Activated CD4-positive, alpha-beta memory T cell treated with anti-CD3 and anti-CD28 coated beads for 36 hours (primary cell): ENCODE measurements at regions of chr2 and their contacts with region 1.

Region 1: GRCh38 chr2:176110975-176111663 is 4.0 kb downstream of the HOXD11 start:
- DNase-seq: peak; percentile 49
- H3K4me3 Mint-ChIP-seq: peak overlapping the region; percentile 8
- H3K27ac Mint-ChIP-seq: no peak overlapping the region
- H3K4me1 Mint-ChIP-seq: peaks cover 14% of the 10 kb centered on the region
- H3K27me3 Mint-ChIP-seq: peaks cover 80% of the 10 kb centered on the region

Region 2: GRCh38 chr2:176161819-176162626 is 50.9 kb after region 1 on chr2:
- CTCF ChIA-PET with region 1: no interaction called
- POLR2A ChIA-PET with region 1: no interaction called
- intact Hi-C with region 1: loop called (anchors 5 kb)
- DNase-seq: no peak
- H3K4me3 Mint-ChIP-seq: no peak overlapping the region
- H3K27ac Mint-ChIP-seq: no peak overlapping the region
- H3K4me1 Mint-ChIP-seq: peaks cover 9% of the 10 kb centered on the region
- H3K27me3 Mint-ChIP-seq: peaks cover 78% of the 10 kb centered on the region